Lower leg skin (tissue), 4 donors: ENCODE measurements at regions of chr6 and their contacts with region 1.

Region 1: GRCh38 chr6:40308533-40309306 is 278.4 kb downstream of the LRFN2 start:
- DNase-seq: peak; percentile 43 to 89
- H3K4me3 ChIP-seq: no peak overlapping the region
- CTCF ChIP-seq: peak in 1 of 3 donors; percentile 83
- POLR2A ChIP-seq: no peak

Region 2: GRCh38 chr6:39980839-39981580 is 327.7 kb before region 1 on chr6:
- intact Hi-C with region 1: loop called (anchors 5 kb)
- DNase-seq: peak in 1 of 2 donors; percentile 33
- H3K4me3 ChIP-seq: no peak overlapping the region
- CTCF ChIP-seq: no peak
- POLR2A ChIP-seq: no peak

Region 3: DNA sequence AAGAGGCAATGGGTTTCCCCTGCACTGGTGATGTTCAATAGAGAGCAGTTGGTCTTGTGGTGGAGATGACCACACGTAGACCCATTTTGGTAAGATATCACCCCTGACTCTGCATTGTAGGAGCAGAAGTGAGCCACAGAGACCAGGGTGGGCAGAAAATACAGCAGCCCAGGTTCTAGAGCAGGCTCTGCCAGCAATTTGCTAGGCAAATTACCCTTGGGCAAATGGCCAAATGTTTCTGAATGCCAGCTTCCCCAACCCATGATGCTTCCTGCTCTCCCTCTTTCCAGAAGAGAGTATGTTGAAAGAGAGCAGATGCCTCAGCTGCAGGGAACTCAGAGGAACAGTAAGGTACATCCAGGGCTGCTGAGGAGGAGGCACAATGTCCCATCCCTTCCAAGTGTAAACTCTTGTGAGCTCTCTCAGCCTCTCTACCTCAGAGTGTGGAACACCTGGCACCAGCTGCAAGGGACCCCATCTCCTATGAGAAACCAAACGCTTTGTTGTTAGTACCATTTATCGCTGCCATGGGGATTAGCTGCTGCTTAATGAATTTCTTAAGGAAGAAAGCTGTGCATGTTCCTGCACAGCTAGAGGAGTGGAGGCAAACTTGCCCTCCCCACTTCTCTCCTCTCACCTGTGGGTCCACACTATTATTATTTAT is 57.0 kb before region 1 on chr6:
- intact Hi-C with region 1: loop called (anchors 2 kb)
- DNase-seq: peak in 1 of 2 donors; percentile 48
- H3K4me3 ChIP-seq: no peak overlapping the region
- CTCF ChIP-seq: no peak
- POLR2A ChIP-seq: no peak